ENCODE measurements at regions of chr14 and their contacts with region 1.

Region 1: GRCh38 chr14:51901475-51902024 is 41.1 kb downstream of the GNG2 start:
- DNase-seq: peak in 5 of 9 experiments; percentile 14 to 74 (median 50)
- ATAC-seq: peak; percentile 76
- H3K4me3 ChIP-seq: no peak overlapping the region
- H3K4me3 Mint-ChIP-seq: peak overlapping the region; percentile 11
- H3K27ac ChIP-seq: peak overlapping the region in 1 of 2 experiments; percentile 34
- H3K27ac Mint-ChIP-seq: peak overlapping the region; percentile 71
- H3K4me1 ChIP-seq: peaks cover 29% of the 10 kb centered on the region
- H3K4me1 Mint-ChIP-seq: peaks cover 70% of the 10 kb centered on the region
- H3K27me3 ChIP-seq: no peaks in the 10 kb centered on the region
- H3K27me3 Mint-ChIP-seq: no peaks in the 10 kb centered on the region
- CTCF ChIP-seq: no peak

Region 2: GRCh38 chr14:51957950-51958349 is 56.4 kb after region 1 on chr14:
- CTCF ChIA-PET with region 1: no interaction called
- POLR2A ChIA-PET with region 1: no interaction called
- intact Hi-C with region 1: loop called in 1 of 2 experiments (anchors 5 kb)
- DNase-seq: no peak
- ATAC-seq: no peak
- H3K4me3 ChIP-seq: no peak overlapping the region
- H3K4me3 Mint-ChIP-seq: no peak overlapping the region
- H3K27ac ChIP-seq: no peak overlapping the region
- H3K27ac Mint-ChIP-seq: no peak overlapping the region
- H3K4me1 ChIP-seq: peaks cover 20% of the 10 kb centered on the region
- H3K4me1 Mint-ChIP-seq: peaks cover 48% of the 10 kb centered on the region
- H3K27me3 ChIP-seq: no peaks in the 10 kb centered on the region
- H3K27me3 Mint-ChIP-seq: no peaks in the 10 kb centered on the region
- CTCF ChIP-seq: no peak